ENCODE measurements at regions of chr11 and their contacts with region 1.

Region 1: GRCh38 chr11:8777907-8778767 is 95.5 kb downstream of the RPL27A start:
- DNase-seq: peak; percentile 76
- ATAC-seq: peak; percentile 79 to 82

Region 2: DNA sequence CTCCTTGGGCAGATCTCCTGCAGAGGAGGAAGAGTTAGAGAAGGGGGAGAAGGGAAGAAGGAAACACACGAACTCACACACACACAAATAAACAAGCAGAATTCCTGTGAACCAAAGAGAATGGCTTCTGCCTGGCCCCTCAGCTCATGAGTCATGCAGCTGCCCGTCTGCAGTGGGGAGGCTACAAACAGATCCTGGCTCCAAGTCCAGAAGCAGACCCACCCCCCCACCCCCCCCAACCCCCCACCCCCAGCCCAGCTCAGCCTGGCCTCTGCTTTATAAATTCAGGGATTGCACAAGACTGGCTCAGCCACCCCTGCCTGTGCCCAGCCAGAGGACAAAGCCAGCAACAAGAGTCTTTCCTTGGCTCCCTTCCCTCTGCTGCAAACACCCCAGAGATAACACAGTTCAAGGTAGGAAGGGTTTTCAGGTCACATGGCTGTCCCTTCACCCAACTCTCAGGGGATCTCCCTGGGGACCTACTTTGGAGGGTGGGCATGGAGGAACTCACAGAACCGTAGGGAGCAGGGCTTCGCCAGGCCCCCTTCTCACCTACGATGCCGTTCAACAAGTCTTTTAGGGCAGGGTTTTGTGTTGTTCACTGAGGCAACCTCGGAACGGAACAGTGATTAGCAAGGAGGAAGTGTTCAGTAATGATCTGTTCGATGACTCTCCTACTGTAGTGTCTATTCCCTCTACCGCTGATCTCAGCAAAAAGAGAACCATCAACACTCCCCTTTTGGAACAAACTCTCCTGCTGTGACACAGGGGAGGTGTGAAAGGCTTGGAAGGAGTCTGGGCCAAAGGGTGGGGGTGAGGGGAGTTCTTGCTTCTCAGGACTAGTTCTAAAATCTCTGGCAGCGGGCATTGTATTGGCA is 60.0 kb before region 1 on chr11:
- intact Hi-C with region 1: loop called in 1 of 2 experiments (anchors 5 kb)
- DNase-seq: peak; percentile 59
- ATAC-seq: peak; percentile 61 to 72

Region 3: DNA sequence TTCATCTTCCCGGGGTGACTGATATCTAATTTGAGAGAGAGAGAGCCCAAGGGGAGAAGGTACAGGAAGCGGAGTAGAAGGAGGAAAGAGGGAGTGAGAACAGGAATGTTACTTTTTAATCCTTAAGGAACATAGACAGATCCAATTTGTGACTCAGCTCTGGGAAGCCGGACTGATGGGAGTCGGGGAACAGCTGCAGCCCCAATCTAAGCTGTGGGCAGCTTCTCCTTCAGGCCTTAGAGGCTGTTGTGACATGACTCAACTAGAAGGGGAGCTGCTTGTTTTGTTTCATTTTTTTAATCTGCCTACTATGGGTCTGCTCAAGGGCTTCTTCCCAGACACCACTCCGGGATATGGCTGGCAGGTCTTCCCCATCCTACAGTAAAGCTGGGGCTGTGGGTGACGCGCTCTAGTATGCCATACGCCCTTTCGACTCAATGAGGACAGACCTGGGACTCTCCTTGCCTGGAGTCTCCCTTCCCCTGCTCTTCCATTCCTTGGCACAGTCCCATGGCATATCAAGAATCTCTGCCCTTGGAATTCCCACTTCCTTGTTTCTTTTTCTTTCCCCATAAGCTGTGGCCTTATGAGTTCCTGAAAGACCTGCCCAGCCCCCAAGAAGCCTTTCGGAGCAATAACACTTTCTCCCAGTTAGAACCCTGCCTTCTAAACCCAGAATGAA is 29.5 kb after region 1 on chr11:
- intact Hi-C with region 1: loop called in 1 of 2 experiments (anchors 5 kb)
- DNase-seq: peak; percentile 49
- ATAC-seq: peak; percentile 35 to 68